Right ventricle myocardium superior (tissue), 1 donor: ENCODE measurements at regions of chr19 and their contacts with region 1.

Region 1: DNA sequence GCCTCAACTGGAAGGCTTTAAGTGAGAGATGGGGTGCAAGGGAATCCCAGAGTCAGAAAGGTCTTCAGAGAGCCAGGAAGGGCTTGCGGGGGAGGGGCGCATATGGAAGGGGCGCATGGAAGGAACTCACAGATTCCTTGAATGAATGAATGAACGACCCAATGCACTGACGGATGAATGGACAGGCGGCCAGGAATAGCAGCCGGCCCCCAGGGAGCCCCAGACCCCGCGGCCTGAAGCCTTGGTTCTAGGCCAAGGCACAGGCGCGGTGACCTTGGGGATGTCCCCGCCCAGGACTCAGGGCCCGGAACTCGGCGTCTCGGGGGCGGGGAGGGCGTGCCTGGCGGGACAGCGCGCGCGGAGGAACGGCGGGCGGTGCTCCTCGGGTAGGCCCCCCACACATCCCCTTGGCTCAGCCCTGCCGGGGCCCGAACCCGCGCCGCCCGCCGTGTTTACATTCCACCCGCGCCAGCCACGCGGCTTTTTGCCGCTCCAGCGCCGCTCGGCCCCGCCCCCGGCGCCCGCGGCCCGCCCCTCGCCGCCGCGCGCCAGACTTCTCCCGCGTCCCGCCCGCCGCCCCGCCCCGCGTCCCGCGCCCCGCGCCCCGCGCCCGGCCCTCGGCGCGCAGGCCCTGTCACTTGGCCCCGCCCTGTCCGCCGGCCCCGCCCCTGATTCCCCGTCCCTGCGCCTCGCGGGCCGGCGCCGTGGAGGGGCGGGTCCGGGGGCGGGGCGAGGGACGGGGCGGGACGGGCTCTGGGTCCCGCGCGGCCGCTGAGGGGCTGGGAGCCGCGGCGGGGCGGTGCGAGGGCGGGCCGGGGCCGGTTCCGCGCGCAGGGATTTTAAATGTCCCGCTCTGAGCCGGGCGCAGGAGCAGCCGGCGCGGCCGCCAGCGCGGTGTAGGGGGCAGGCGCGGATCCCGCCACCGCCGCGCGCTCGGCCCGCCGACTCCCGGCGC is at the start of gene CCNE1:
- DNase-seq: peak; percentile 97
- ATAC-seq: peak; percentile 98
- total RNA-seq, gene CCNE1: 4.1 TPM

Region 2: DNA sequence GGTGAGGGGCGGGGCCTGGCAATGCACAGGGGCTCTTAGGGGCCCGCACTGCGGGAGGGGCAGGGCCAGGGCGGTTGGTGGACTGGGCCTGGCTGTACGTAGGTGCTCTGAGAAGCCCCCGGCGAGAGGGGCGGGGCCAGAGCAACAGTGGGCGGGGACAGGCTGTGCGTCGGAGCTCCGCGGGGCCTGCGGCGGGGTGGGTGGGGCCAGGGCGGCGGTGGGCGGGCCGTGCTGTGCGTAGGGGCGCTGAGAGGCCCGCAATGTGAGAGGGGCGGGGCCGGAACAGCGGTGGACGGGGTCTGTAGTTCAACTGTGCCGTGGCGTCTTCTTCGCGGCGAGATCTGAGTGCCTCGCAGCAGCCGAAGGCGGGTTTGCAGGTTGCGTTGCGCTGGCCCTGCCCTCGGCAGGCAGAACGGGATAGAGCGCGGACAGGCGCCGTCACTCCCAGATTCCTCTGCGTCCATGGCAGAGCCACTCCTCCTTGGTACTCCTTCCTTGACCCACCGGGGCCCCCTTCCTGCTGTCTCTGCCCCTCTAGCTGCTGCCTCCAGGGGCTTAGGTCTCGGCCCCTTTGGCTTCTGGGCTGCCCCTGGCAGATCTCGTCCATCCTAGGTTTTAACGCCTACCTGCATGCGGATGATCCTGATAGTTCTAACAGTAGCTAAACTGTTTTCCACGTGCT is 33.6 kb after region 1 on chr19:
- intact Hi-C with region 1: loop called (anchors 2 kb)
- DNase-seq: peak; percentile 95
- ATAC-seq: peak; percentile 94

Region 3: DNA sequence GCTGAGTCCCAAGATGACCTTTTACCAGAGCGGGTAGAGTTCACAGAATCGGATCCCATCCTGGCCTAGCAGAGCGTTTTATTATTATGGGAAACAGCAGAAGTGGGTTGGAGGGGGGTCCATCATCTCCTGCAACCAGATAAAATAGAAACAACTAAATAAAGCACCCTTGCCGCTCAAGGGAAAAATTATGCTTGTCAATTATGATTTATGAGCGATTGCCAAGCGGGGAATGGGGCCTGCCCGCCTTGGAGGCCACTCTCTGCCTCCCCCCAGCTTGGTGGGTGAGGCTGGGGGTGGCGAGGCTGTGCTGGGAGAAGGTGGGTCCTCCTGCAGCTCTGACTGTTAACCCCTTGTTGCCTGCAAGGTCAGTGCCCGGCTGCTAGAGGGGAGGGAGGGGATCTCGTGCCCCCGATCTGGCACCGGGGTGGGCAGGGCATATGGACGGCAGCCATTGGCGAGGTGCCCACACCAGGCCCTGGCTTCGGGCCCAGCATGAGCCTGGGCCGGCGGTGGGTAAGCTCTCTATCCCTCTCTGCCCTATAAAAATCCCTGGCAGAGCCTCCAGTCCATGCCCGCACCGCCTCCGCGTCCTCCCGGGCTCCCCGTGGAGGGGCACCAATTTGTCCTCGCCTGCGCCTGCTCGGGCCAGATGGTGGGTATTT is 259.7 kb after region 1 on chr19:
- intact Hi-C with region 1: no loop called
- DNase-seq: peak; percentile 54
- ATAC-seq: peak; percentile 83